AG04449 (cell line): ENCODE measurements at regions of chr1 and their contacts with region 1.

Region 1: DNA sequence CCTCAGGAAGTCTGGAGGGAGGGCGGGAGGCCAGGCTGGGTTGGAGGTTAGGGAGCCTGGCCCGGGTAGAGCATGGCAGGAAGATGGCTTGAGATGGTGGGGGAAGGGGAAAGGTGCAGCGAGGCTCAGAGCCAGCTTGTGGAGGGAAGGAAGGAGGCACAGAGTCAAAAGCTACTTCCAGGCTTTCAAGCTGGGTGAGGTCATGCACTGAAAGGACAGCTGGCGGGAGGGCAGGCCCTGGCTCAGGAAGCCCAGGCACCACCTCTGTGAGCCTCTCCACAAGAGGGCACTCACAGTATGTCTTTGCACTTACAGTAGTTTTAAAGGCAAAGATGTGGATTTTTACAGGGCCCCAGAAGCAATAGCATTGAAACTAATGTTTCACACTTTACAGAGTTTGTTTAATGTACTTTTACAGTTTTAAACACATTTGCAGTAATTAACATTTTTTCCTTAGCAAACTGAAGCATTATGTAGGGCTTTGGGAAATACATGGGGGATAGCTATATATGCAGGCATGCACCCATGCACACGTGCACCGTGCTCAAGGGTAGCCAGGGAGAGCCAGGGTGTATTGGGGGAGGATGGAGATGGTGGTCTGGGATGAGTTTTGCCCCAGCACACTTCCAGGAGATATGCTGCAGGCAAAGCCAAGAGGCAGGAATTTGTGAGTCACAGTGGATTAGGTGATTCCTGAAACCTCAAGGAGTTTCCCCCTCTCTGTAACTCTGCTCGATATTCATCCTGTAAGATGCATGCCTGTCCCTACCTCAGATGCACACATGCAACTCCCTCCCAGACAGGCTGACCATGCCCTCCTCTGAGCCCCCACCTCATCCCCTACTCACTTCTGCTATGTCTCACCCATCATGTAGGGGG is 6.1 kb upstream of the ADAM15 start:
- DNase-seq: no peak
- H3K4me3 ChIP-seq: no peak overlapping the region
- CTCF ChIP-seq: peak; percentile 75

Region 2: GRCh38 chr1:154895798-154896197 is 149.3 kb before region 1 on chr1:
- CTCF ChIA-PET with region 1: no interaction called
- POLR2A ChIA-PET with region 1: no interaction called
- DNase-seq: no peak
- H3K4me3 ChIP-seq: no peak overlapping the region
- CTCF ChIP-seq: no peak

Region 3: GRCh38 chr1:155070721-155071569 is 25.9 kb after region 1 on chr1:
- CTCF ChIA-PET with region 1: interaction called, 433 read pairs
- POLR2A ChIA-PET with region 1: no interaction called
- DNase-seq: no peak
- H3K4me3 ChIP-seq: peak overlapping the region; percentile 44
- CTCF ChIP-seq: peak; percentile 46

Region 4: GRCh38 chr1:155078469-155079209 is 33.6 kb after region 1 on chr1 and contains the start of gene EFNA3:
- CTCF ChIA-PET with region 1: interaction called, 18 read pairs
- POLR2A ChIA-PET with region 1: no interaction called
- DNase-seq: no peak
- H3K4me3 ChIP-seq: peak within 1 kb of the TSS; percentile 51
- CTCF ChIP-seq: no peak